ENCODE measurements at regions of chr16 and their contacts with region 1.

Region 1: GRCh38 chr16:57757326-57757786 is 21.8 kb downstream of the KATNB1 start:
- DNase-seq: peak; percentile 78 to 92
- ATAC-seq: peak; percentile 95

Region 2: DNA sequence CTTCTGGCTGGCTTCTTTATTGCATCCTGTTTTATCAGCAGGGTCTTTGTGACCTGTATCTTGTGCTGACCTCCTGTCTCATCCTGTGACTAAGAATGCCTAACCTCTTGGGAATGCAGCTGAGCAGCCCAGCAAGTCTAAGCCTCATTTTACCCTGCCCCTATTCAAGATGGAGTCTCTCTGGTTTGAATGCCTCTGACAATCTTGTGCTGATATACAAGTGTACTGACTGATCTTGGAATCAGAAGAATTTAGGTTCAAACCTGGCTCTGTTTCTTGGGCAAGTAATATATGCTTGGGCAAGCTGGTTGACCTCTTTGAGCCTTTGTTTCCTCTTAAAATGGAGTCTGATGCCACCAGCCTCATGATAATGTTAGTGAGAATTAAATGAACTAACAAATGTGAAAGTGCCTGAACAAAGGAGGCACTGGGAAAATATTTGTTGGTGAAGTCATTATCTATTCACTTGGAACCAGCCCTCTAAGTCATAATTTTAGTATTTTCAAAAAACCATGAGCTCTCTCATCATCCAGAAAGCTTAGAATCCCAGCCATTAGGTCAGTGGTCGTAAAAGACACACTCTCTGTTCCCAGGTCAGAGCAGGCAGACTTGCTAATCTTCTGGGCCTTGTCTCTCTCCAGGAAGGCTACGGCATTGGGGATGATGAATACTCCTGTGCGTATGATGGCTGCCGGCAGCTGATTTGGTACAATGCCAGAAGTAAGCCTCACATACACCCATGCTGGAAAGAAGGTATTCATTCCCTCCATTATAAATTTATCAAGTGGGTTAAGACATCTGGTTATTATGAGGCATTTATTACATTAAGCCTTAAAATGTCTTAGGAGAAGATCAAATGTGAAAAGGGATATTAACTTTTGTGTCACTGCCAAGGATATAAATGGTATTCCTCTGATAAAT is 530.4 kb before region 1 on chr16:
- intact Hi-C with region 1: no loop called
- DNase-seq: no peak
- ATAC-seq: no peak

Region 3: GRCh38 chr16:57244767-57245471 is 512.4 kb before region 1 on chr16 and contains the start of gene ARL2BP:
- intact Hi-C with region 1: no loop called
- DNase-seq: peak; percentile 98
- ATAC-seq: peak; percentile 92
- total RNA-seq, gene ARL2BP: 32.3 to 35.3 TPM

Region 4: DNA sequence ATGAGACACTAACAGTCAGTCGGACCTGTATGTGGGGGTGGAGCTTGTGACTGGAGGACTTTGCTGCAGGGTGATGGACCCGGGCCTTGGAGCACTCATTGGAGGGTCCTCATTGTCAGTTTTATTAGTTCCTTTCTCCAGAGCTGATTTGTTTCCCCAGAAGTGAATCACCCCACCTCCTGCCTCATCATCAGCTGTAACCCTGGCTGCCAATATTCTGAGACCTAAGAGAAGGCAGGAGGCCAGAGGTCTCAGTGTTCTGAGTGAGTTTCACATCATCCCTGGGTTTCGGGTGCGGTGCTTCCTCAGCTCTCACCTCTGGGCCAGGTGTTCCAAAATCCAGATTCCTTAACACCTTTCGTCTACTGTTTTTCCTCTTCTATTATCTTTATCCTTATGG is 94.8 kb after region 1 on chr16:
- intact Hi-C with region 1: no loop called
- DNase-seq: no peak
- ATAC-seq: no peak

Region 5: GRCh38 chr16:57863434-57864160 is 106.2 kb after region 1 on chr16:
- intact Hi-C with region 1: loop called in 1 of 2 experiments (anchors 5 kb)
- DNase-seq: peak; percentile 52 to 55
- ATAC-seq: peak; percentile 90

Region 6: GRCh38 chr16:57994778-57995177 is 237.4 kb after region 1 on chr16:
- intact Hi-C with region 1: loop called in 1 of 2 experiments (anchors 10 kb)
- DNase-seq: peak; percentile 45 to 67
- ATAC-seq: peak; percentile 76

Region 7: GRCh38 chr16:58652461-58653140 is 895.2 kb after region 1 on chr16:
- intact Hi-C with region 1: no loop called
- DNase-seq: no peak
- ATAC-seq: no peak

Measured in left colon (tissue), 2 donors.